ENCODE measurements at regions of chr7 and their contacts with region 1.

Region 1: GRCh38 chr7:92881091-92881485 is 44.7 kb upstream of the CDK6 start:
- DNase-seq: no peak
- H3K4me3 ChIP-seq: no peak overlapping the region
- H3K27ac ChIP-seq: no peak overlapping the region
- H3K4me1 ChIP-seq: no peaks in the 10 kb centered on the region
- H3K27me3 ChIP-seq: no peaks in the 10 kb centered on the region
- CTCF ChIP-seq: no peak
- POLR2A ChIP-seq: no peak

Region 2: GRCh38 chr7:92528188-92528957 is 352.7 kb before region 1 on chr7 and contains the starts of genes PEX1 and RBM48:
- intact Hi-C with region 1: no loop called
- DNase-seq: peak; percentile 96 to 99 (median 97)
- H3K4me3 ChIP-seq: peak within 1 kb of the TSS; percentile 35 to 99 (median 72)
- H3K27ac ChIP-seq: peak within 1 kb of the TSS; percentile 61 to 93 (median 81)
- H3K4me1 ChIP-seq: peaks cover 12 to 23% of the 10 kb centered on the region in 2 donors
- H3K27me3 ChIP-seq: no peaks in the 10 kb centered on the region
- CTCF ChIP-seq: peak in 2 of 6 experiments; percentile 22 to 39
- POLR2A ChIP-seq: peak; percentile 38 to 82
- total RNA-seq, gene PEX1: 8.8 to 33.2 (median 16.5) TPM
- total RNA-seq, gene RBM48: 4.4 to 29.0 (median 11.4) TPM

Region 3: DNA sequence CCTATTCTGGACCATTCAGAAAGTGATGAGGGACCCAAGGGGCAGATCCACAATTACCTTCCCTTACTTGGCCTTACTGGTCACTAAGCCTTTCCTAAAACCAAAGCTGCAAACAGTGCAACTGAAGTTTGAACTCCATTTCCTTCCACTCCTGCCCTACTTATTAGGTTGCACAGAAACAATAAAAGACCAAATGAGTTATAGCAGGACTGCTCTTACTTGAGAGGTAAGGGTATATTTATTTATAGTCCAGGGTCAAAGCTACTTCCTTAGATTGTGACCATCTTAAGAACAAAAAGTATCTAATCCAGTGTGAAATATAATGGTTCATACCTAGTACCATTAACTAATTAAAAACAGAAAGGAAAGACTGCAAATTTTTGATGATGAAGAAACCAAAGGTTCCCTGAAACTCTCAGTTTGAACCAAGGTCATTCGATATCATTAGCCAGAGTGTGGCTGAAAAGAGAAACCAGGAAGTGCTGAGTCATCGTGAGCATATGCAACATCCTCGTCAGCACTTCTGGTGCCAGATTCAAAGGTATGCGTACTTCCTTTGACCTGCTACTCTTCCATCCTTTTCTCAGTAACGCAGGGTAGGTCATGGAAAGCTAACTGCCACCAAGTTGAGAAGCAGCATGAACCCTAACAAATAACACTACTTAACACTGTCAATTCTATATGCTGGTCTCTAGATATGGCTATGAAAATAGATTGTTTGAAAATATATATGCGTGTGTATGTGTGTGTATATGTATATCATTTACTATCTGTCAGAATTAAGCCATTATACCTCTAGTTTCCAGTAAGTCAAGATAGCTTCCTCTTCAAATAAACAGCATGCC is 71.5 kb before region 1 on chr7:
- intact Hi-C with region 1: no loop called
- DNase-seq: peak; percentile 78 to 94 (median 85)
- H3K4me3 ChIP-seq: peak overlapping the region in 1 of 4 donors; percentile 7
- H3K27ac ChIP-seq: peak overlapping the region; percentile 54 to 91 (median 83)
- H3K4me1 ChIP-seq: peaks cover 25 to 45% of the 10 kb centered on the region in 2 donors
- H3K27me3 ChIP-seq: no peaks in the 10 kb centered on the region
- CTCF ChIP-seq: no peak
- POLR2A ChIP-seq: peak in 1 of 2 donors; percentile 6

Region 4: DNA sequence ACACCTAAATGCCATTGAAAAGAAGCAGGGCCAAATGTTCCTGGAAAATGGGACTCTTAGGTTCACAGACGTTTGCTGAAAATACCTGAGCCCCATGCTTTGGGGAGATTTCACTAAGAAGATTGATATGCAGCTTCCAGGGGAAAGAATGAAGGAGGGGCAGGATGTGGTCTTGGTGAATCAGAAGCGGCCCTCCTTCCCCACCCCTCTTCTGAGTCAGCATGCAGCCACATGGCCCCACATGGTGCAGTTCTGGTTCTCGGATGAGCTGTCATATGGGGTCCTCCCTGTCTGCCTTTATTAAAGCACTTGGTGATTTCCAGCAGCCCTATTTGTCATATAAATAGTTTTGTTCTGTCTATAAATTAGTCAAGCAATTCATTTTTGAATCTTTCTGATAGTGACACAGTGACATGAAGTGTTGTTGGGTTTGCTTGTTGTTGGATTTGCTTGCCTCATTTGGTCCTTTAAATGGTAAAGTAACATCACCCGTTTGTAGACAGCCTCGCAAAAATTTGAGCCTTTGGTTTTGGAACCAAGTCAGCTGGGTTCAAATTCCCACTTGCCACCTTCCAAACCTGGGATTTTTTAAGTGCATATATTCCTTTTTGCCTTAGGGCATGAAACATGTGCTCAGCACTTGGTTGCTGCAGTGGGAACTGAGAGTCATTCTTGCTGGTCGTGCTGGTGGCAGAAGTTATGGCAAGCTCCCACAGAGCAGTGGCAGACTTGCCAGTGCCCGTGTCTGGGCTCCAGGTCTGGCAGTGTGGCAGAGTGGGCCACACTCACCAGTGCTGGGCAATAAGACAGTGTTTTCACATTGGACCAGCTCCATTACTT is 23.4 kb after region 1 on chr7:
- intact Hi-C with region 1: loop called in 1 of 2 experiments (anchors 2 kb)
- DNase-seq: no peak
- H3K4me3 ChIP-seq: no peak overlapping the region
- H3K27ac ChIP-seq: no peak overlapping the region
- H3K4me1 ChIP-seq: no peaks in the 10 kb centered on the region
- H3K27me3 ChIP-seq: no peaks in the 10 kb centered on the region
- CTCF ChIP-seq: no peak
- POLR2A ChIP-seq: no peak

Measured in adrenal gland (tissue), 19 donors.